ENCODE measurements at regions of chr22 and their contacts with region 1.

Region 1: GRCh38 chr22:33519071-33519973 is 401.0 kb downstream of the LARGE1 start:
- DNase-seq: peak; percentile 46 to 71
- ATAC-seq: peak; percentile 77 to 88
- H3K4me3 ChIP-seq: no peak overlapping the region
- H3K27ac ChIP-seq: peak overlapping the region; percentile 53 to 74; a peak in 5 of 6 replicates
- H3K4me1 ChIP-seq: peaks cover 21% of the 10 kb centered on the region
- CTCF ChIP-seq: peak; percentile 59
- EP300 ChIP-seq: no peak
- POLR2A ChIP-seq: no peak
- RAD21 ChIP-seq: peak; percentile 77 to 85

Region 2: GRCh38 chr22:33389936-33390335 is 129.4 kb before region 1 on chr22:
- CTCF ChIA-PET with region 1: no interaction called
- POLR2A ChIA-PET with region 1: no interaction called
- DNase-seq: no peak
- ATAC-seq: no peak
- H3K4me3 ChIP-seq: no peak overlapping the region
- H3K27ac ChIP-seq: no peak overlapping the region
- H3K4me1 ChIP-seq: no peaks in the 10 kb centered on the region
- CTCF ChIP-seq: no peak
- EP300 ChIP-seq: no peak
- POLR2A ChIP-seq: no peak
- RAD21 ChIP-seq: no peak

Region 3: GRCh38 chr22:33529424-33530113 is 10.2 kb after region 1 on chr22:
- CTCF ChIA-PET with region 1: interaction called, 10 read pairs
- POLR2A ChIA-PET with region 1: no interaction called
- DNase-seq: no peak
- ATAC-seq: no peak
- H3K4me3 ChIP-seq: no peak overlapping the region
- H3K27ac ChIP-seq: no peak overlapping the region
- H3K4me1 ChIP-seq: peaks cover 7% of the 10 kb centered on the region
- CTCF ChIP-seq: no peak
- EP300 ChIP-seq: no peak
- POLR2A ChIP-seq: no peak
- RAD21 ChIP-seq: no peak

Region 4: GRCh38 chr22:33539902-33540751 is 20.8 kb after region 1 on chr22:
- CTCF ChIA-PET with region 1: interaction called, 11 read pairs
- POLR2A ChIA-PET with region 1: no interaction called
- DNase-seq: peak; percentile 58 to 98
- ATAC-seq: peak; percentile 90 to 96
- H3K4me3 ChIP-seq: no peak overlapping the region
- H3K27ac ChIP-seq: peak overlapping the region; percentile 82 to 88
- H3K4me1 ChIP-seq: peaks cover 52% of the 10 kb centered on the region
- CTCF ChIP-seq: no peak
- EP300 ChIP-seq: peak; percentile 70 to 84; a peak in 4 of 5 replicates
- POLR2A ChIP-seq: no peak
- RAD21 ChIP-seq: peak; percentile 1 to 50; a peak in 3 of 5 replicates

Region 5: DNA sequence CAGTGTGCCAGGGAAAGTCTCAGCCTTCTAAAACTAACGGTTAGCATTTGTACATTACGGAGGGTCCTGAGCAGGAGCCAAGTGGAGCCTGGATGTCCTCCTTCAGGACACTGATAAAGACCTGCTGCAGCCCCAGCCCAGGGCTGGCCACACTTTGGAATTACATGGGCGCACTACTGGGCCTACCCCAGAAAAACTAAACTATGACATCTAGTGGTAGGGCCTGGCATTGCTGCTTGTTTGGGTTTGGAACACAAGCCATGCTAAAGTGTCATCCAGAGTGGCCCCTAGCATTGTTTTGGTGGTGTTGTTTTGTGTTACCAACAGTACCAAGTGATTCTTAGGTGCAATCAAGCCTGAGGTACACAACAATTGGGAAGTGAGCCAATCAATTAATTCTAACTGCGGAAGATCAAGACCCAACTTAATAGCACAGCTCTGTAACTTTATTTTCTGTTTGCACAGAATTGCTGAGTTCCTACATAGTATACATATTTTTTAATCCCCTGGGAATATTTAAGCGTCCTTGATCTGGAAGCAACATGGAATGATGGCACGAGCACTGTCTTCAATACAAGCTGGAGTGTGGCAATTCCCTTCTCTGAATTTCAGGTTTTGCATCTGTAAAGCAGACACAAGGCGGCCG is 60.2 kb after region 1 on chr22:
- CTCF ChIA-PET with region 1: interaction called, 48 read pairs
- POLR2A ChIA-PET with region 1: no interaction called
- DNase-seq: peak; percentile 41 to 68
- ATAC-seq: peak; percentile 91 to 97
- H3K4me3 ChIP-seq: no peak overlapping the region
- H3K27ac ChIP-seq: peak overlapping the region; percentile 11 to 64; a peak in 5 of 6 replicates
- H3K4me1 ChIP-seq: peaks cover 38% of the 10 kb centered on the region
- CTCF ChIP-seq: peak; percentile 72
- EP300 ChIP-seq: no peak
- POLR2A ChIP-seq: no peak
- RAD21 ChIP-seq: peak; percentile 88 to 91

Region 6: DNA sequence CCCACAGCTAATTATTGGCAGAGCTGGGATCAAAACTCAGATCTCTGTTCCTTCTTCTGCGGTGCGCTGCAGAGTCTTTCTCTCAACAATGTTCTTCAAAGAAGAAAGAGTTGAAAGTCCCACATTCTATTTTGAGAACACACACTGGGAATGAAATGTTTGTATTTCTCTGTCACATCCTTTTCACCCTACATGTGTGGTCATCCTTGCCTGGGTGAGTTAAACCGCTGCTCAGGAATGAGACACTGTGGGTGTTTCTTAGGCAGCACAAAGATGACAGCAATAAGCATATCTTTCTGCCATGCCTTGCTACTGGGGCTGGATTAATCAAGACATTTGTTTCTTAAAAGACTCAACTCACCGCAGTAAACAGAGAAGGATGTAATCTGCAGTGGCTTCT is 178.3 kb after region 1 on chr22:
- CTCF ChIA-PET with region 1: no interaction called
- POLR2A ChIA-PET with region 1: no interaction called
- DNase-seq: no peak
- ATAC-seq: no peak
- H3K4me3 ChIP-seq: no peak overlapping the region
- H3K27ac ChIP-seq: no peak overlapping the region
- H3K4me1 ChIP-seq: no peaks in the 10 kb centered on the region
- CTCF ChIP-seq: no peak
- EP300 ChIP-seq: no peak
- POLR2A ChIP-seq: no peak
- RAD21 ChIP-seq: no peak

Measured in A549 (cell line).